Activated T-helper 2 cell treated with anti-CD3 and anti-CD28 coated beads, Interferon-gamma antibody, Interleukin-2, Interleukin-4, amounts not matched to agents 10 μg/mL and 5 μg/mL and 100 μg/mL, durations not matched to agents 14 hours and 24 hours and 36 hours (primary cell): ENCODE measurements at regions of chr14 and their contacts with region 1.

Region 1: DNA sequence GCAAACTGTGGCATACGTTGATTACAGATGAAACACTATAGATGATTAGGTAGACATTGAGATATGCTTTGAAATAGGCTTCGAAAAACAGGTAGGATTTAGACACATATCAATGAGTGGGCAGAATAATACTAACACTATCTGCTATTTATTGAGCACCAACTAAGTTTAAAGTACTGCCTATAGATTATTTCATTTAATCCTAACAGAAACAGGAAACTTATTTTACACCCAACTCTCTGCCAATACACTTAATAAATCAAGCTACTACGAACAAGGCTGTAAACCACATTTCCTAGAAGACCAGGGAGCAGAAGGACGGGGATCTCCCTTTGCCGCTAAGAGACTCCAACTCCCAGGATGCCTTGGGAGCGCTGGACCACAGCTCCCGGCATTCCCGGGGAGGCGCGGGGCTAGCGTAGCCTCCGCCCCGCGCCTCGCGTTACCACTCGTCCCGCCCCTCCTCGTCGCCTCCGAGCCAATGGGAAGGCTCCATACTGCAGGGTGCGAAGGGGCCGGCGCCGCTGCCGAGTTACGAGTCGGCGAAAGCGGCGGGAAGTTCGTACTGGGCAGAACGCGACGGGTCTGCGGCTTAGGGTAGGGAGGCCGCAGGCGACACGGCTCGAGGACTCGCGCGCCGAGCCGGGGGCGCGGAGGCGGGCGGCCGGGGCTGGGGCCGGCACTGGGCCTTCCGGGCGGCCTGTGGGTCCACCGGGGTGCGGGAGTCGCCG is at the start of gene VRK1:
- DNase-seq: peak; percentile 90
- H3K4me3 Mint-ChIP-seq: peak within 1 kb of the TSS; percentile 87
- H3K27ac Mint-ChIP-seq: peak within 1 kb of the TSS; percentile 80
- H3K4me1 Mint-ChIP-seq: peaks cover 33% of the 10 kb centered on the region
- H3K27me3 Mint-ChIP-seq: peaks cover 7% of the 10 kb centered on the region
- total RNA-seq, gene VRK1: 67.8 and 70.4 TPM in 2 replicates

Region 2: DNA sequence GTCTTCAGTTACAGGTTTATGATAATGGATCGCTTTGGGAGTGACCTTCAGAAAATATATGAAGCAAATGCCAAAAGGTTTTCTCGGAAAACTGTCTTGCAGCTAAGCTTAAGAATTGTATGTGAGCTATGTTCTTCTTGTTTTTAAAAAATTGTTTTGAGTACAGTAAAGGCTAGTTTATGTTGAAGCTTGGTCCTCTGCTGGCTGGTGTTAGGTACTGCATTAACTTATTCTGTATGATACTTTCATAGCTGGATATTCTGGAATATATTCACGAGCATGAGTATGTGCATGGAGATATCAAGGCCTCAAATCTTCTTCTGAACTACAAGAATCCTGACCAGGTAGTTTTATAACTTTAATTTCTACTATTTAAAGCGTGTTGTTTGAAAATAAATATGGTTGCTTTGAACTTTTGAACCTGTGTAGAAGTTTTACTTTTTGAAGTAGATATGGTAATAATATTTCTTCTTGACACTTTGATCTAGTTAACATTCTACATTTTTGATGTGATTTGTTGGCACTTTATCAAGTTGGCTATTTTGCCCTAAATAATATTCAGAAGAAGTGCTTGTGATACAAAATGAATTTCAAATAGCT is 55.9 kb after region 1 on chr14:
- intact Hi-C with region 1: loop called (anchors 5 kb)
- DNase-seq: no peak
- H3K4me3 Mint-ChIP-seq: no peak overlapping the region
- H3K27ac Mint-ChIP-seq: peak overlapping the region; percentile 29
- H3K4me1 Mint-ChIP-seq: peaks cover 25% of the 10 kb centered on the region
- H3K27me3 Mint-ChIP-seq: no peaks in the 10 kb centered on the region

Region 3: GRCh38 chr14:97164021-97164420 is 367.0 kb after region 1 on chr14:
- intact Hi-C with region 1: no loop called
- DNase-seq: no peak
- H3K4me3 Mint-ChIP-seq: no peak overlapping the region
- H3K27ac Mint-ChIP-seq: no peak overlapping the region
- H3K4me1 Mint-ChIP-seq: no peaks in the 10 kb centered on the region
- H3K27me3 Mint-ChIP-seq: peaks cover 3% of the 10 kb centered on the region